Dendritic cell treated with granulocyte-macrophage colony-stimulating factor and Interleukin-4, amounts not matched to agents 40 ng/mL and 50 ng/mL, for 4 days (primary cell): ENCODE measurements at regions of chr1 and their contacts with region 1.

Region 1: GRCh38 chr1:167599957-167600581 is 30.0 kb upstream of the RCSD1 start:
- H3K4me3 Mint-ChIP-seq: no peak overlapping the region
- H3K27ac Mint-ChIP-seq: peak overlapping the region; percentile 59
- H3K4me1 Mint-ChIP-seq: peaks cover 51% of the 10 kb centered on the region
- H3K27me3 Mint-ChIP-seq: no peaks in the 10 kb centered on the region

Region 2: DNA sequence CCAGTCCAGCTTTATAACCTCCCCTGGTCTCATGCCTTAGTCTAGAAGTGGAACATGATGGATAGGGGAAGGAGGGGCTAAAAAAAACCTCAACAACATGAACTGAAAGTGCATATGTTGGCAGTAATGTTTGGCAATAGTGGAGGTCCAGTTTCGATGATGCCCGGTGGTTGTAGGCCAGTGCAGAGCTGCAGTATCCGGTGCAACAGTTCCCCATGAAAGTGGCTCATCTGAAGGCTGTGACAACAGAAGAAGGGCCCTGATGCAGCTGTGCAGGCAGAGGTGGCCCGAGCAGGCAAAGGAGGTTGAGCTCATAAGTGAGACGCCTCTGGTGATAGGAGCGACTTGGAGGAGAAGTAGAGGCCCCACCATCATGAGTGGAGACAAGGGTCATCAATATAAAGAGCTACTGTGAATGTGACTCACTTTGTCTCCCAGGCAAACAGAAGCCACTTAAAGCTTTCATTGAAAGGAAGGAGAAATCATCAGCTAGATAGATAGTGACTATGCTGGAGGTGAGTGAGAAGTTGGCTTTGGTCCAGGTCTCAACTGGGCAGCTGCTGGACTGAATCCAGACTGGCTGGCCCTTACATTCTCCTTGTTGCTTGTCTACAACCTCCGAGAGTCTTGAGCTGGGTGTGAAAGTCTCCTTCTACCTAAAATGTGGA is 36.4 kb before region 1 on chr1:
- intact Hi-C with region 1: loop called (anchors 5 kb)
- H3K4me3 Mint-ChIP-seq: peak overlapping the region; percentile 34
- H3K27ac Mint-ChIP-seq: peak overlapping the region; percentile 89
- H3K4me1 Mint-ChIP-seq: peaks cover 66% of the 10 kb centered on the region
- H3K27me3 Mint-ChIP-seq: no peaks in the 10 kb centered on the region

Region 3: GRCh38 chr1:167629681-167630567 is 29.9 kb after region 1 on chr1 and contains the start of gene RCSD1:
- intact Hi-C with region 1: loop called (anchors 2 kb)
- H3K4me3 Mint-ChIP-seq: peak within 1 kb of the TSS; percentile 75
- H3K27ac Mint-ChIP-seq: peak within 1 kb of the TSS; percentile 81
- H3K4me1 Mint-ChIP-seq: peaks cover 76% of the 10 kb centered on the region
- H3K27me3 Mint-ChIP-seq: no peaks in the 10 kb centered on the region

Region 4: DNA sequence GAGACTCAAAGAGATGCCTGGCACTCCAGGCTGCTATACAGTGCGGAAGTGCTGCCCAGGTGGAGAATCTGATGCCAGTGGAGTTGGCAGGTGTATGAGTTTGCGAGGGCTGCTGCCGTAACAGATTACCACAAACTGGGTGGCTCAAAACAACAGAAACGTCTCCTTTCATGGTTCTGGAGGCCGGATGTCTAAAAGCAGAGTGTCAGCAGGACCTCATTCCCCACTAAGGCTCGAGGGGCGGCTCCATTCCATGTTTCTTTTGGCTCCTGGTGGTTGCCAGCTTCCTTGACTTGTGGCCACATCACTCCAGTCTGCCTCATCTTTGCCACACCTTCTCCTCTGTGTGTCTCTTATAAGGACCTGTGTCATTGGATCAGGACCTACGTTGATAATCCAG is 40.0 kb after region 1 on chr1:
- intact Hi-C with region 1: no loop called
- H3K4me3 Mint-ChIP-seq: no peak overlapping the region
- H3K27ac Mint-ChIP-seq: no peak overlapping the region
- H3K4me1 Mint-ChIP-seq: peaks cover 64% of the 10 kb centered on the region
- H3K27me3 Mint-ChIP-seq: no peaks in the 10 kb centered on the region

Region 5: GRCh38 chr1:167687919-167688519 is 88.0 kb after region 1 on chr1:
- intact Hi-C with region 1: loop called (anchors 1 kb)
- H3K4me3 Mint-ChIP-seq: no peak overlapping the region
- H3K27ac Mint-ChIP-seq: no peak overlapping the region
- H3K4me1 Mint-ChIP-seq: peaks cover 25% of the 10 kb centered on the region
- H3K27me3 Mint-ChIP-seq: no peaks in the 10 kb centered on the region